OCI-LY7 (cell line): ENCODE measurements at regions of chr14 and their contacts with region 1.

Region 1: GRCh38 chr14:92686900-92687444 is 61.5 kb downstream of the LGMN start:
- DNase-seq: peak; percentile 43
- H3K4me3 ChIP-seq: no peak overlapping the region
- H3K27ac ChIP-seq: no peak overlapping the region
- H3K4me1 ChIP-seq: no peaks in the 10 kb centered on the region
- CTCF ChIP-seq: peak; percentile 84

Region 2: GRCh38 chr14:92074555-92074954 is 612.4 kb before region 1 on chr14:
- CTCF ChIA-PET with region 1: no interaction called
- POLR2A ChIA-PET with region 1: no interaction called
- intact Hi-C with region 1: no loop called
- DNase-seq: no peak
- H3K4me3 ChIP-seq: no peak overlapping the region
- H3K27ac ChIP-seq: no peak overlapping the region
- H3K4me1 ChIP-seq: no peaks in the 10 kb centered on the region
- CTCF ChIP-seq: no peak

Region 3: GRCh38 chr14:92292673-92293072 is 394.3 kb before region 1 on chr14:
- CTCF ChIA-PET with region 1: interaction called, 14 read pairs
- POLR2A ChIA-PET with region 1: no interaction called
- intact Hi-C with region 1: no loop called
- DNase-seq: no peak
- H3K4me3 ChIP-seq: no peak overlapping the region
- H3K27ac ChIP-seq: no peak overlapping the region
- H3K4me1 ChIP-seq: no peaks in the 10 kb centered on the region
- CTCF ChIP-seq: no peak

Region 4: GRCh38 chr14:92520092-92520745 is 166.8 kb before region 1 on chr14:
- CTCF ChIA-PET with region 1: no interaction called
- POLR2A ChIA-PET with region 1: no interaction called
- intact Hi-C with region 1: no loop called
- DNase-seq: no peak
- H3K4me3 ChIP-seq: no peak overlapping the region
- H3K27ac ChIP-seq: no peak overlapping the region
- H3K4me1 ChIP-seq: no peaks in the 10 kb centered on the region
- CTCF ChIP-seq: no peak

Region 5: GRCh38 chr14:92783816-92784431 is 97.0 kb after region 1 on chr14:
- CTCF ChIA-PET with region 1: interaction called, 5 read pairs
- POLR2A ChIA-PET with region 1: interaction called, 4 read pairs
- intact Hi-C with region 1: loop called (anchors 2 kb)
- DNase-seq: peak; percentile 74
- H3K4me3 ChIP-seq: no peak overlapping the region
- H3K27ac ChIP-seq: no peak overlapping the region
- H3K4me1 ChIP-seq: peaks cover 6% of the 10 kb centered on the region
- CTCF ChIP-seq: peak; percentile 84